Ascending aorta (tissue), 2 donors: ENCODE measurements at regions of chr9 and their contacts with region 1.

Region 1: DNA sequence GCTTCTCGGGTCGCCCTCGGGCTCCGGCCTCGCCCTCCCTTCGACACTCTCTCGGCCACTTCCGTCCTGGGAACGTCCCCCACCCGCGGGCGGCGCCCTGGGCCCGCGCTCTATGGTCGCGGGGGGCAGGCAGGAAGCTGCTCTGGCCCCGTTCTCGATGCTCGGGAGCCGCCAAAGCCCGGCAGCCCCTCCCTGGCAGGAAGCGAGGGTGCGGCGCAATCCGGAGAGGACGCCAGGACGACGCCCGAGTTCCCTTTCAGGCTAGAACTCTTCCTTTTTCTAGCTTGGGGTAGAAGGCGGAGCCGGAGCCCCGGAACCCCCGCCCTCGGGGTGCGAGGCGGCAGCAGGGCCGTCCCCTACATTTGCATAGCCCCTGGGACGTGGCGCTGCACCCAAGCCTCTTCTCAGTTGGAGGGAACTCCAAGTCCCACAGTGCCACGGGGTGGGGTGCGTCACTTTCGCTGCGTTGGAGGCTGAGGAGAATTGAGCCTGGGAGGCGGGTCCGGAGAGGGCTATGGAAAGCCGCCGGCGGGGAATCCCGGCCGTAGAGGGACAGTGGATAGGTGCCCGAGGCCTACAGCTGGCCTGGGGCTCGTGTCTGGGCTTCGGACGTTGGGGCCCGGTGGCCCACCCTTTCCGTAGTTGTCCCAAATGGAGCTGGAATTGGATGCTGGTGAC is at the starts of genes CREB3 and TLN1:
- DNase-seq: peak; percentile 98 to 100
- H3K4me3 ChIP-seq: peak within 1 kb of the TSS; percentile 74 to 81
- H3K27ac ChIP-seq: peak within 1 kb of the TSS; percentile 98 to 99
- H3K4me1 ChIP-seq: peaks cover 18 to 28% of the 10 kb centered on the region in 2 donors
- H3K27me3 ChIP-seq: no peaks in the 10 kb centered on the region
- CTCF ChIP-seq: no peak
- total RNA-seq, gene CREB3: 48.3 TPM
- total RNA-seq, gene TLN1: 735 TPM

Region 2: GRCh38 chr9:35603987-35604577 is 128.2 kb before region 1 on chr9:
- intact Hi-C with region 1: loop called (anchors 5 kb)
- DNase-seq: peak; percentile 98 to 100
- H3K4me3 ChIP-seq: peak overlapping the region; percentile 92 to 97
- H3K27ac ChIP-seq: peak overlapping the region; percentile 93 to 95
- H3K4me1 ChIP-seq: peaks cover 15 to 26% of the 10 kb centered on the region in 2 donors
- H3K27me3 ChIP-seq: no peaks in the 10 kb centered on the region
- CTCF ChIP-seq: peak; percentile 89 to 96 (median 93)

Region 3: DNA sequence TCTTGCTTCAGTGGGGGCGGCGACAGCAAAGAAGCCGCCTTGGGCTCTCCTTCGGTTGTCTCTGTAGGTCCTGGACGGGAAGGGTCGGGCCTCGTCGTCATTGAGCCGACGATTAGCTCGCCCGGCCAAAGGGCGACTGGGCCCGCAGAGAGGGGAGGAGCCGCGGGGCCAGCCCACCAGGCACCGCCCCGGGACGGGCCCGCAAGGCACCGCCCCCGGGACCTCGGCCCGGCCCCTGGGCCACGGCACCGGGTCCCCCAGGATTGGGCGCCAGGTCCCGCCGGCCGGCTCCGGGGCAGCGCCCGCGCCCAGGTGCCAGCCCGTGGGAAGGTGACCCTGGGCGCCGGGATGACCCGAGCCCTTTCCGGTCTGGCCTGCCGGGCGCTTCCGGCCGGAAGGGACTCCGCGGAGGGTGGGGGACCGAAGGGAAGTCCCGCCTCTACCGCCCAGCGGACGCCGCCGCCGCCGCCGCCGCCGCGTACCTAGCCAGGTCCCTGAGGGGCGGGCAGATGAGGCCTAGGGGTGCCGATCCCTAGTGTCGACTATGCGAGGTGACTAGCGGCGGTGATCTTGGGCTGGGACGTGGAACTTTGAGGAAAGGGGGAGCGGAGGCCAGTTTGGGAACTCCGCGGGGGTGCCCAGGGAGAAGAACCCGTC is 16.7 kb after region 1 on chr9 and contains the starts of genes GBA2 and RGP1:
- intact Hi-C with region 1: loop called (anchors 1 kb)
- DNase-seq: peak in 1 of 2 donors; percentile 89
- H3K4me3 ChIP-seq: peak within 1 kb of the TSS; percentile 87 to 94
- H3K27ac ChIP-seq: peak within 1 kb of the TSS; percentile 94 to 96
- H3K4me1 ChIP-seq: peaks cover 10 to 33% of the 10 kb centered on the region in 2 donors
- H3K27me3 ChIP-seq: no peaks in the 10 kb centered on the region
- CTCF ChIP-seq: no peak
- total RNA-seq, gene GBA2: 40.7 TPM
- total RNA-seq, gene RGP1: 24.8 TPM

Region 4: GRCh38 chr9:35790385-35791296 is 58.4 kb after region 1 on chr9:
- intact Hi-C with region 1: loop called (anchors 2 kb)
- DNase-seq: peak in 1 of 2 donors; percentile 88
- H3K4me3 ChIP-seq: peak overlapping the region; percentile 64 to 87
- H3K27ac ChIP-seq: peak overlapping the region; percentile 81 to 87
- H3K4me1 ChIP-seq: peaks cover 5 to 28% of the 10 kb centered on the region in 2 donors
- H3K27me3 ChIP-seq: no peaks in the 10 kb centered on the region
- CTCF ChIP-seq: peak; percentile 76 to 90 (median 83)

Region 5: GRCh38 chr9:35844716-35845270 is 112.5 kb after region 1 on chr9:
- intact Hi-C with region 1: no loop called
- DNase-seq: peak in 1 of 2 donors; percentile 72
- H3K4me3 ChIP-seq: no peak overlapping the region
- H3K27ac ChIP-seq: peak overlapping the region; percentile 8 to 44
- H3K4me1 ChIP-seq: peaks cover 0 to 26% of the 10 kb centered on the region in 2 donors
- H3K27me3 ChIP-seq: no peaks in the 10 kb centered on the region
- CTCF ChIP-seq: no peak